HEK293 (cell line): ENCODE measurements at regions of chr3 and their contacts with region 1.

Region 1: GRCh38 chr3:148955544-148956346 is 35.6 kb upstream of the GYG1 start:
- H3K4me3 ChIP-seq: no peak overlapping the region
- H3K27ac ChIP-seq: no peak overlapping the region
- H3K4me1 ChIP-seq: no peaks in the 10 kb centered on the region
- CTCF ChIP-seq: 0 out of 2 replicates have a peak, but pooled peaks have one; percentile 29

Region 2: DNA sequence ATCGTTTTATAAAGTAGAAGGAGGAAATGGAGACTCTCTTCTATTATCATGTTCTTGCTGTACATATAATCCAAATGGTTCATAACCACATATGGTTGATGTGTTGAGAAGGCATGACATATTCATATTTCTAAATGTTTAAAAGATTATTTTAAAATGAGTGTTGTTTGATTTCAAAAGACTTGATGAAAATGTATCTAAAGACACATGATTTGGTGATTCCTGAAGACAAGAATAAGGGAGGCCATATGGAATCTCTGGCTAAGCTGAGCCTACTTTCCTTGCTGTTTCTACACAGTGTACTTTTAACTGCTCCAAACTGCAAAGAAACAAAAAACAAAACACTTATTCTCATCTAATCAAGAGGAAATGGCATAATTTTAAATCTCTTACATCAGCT is 12.6 kb after region 1 on chr3:
- CTCF ChIA-PET with region 1: interaction called, 11 read pairs
- POLR2A ChIA-PET with region 1: no interaction called
- H3K4me3 ChIP-seq: no peak overlapping the region
- H3K27ac ChIP-seq: no peak overlapping the region
- H3K4me1 ChIP-seq: no peaks in the 10 kb centered on the region
- CTCF ChIP-seq: no peak

Region 3: GRCh38 chr3:149101641-149102040 is 145.9 kb after region 1 on chr3:
- CTCF ChIA-PET with region 1: no interaction called
- POLR2A ChIA-PET with region 1: no interaction called
- H3K4me3 ChIP-seq: no peak overlapping the region
- H3K27ac ChIP-seq: no peak overlapping the region
- H3K4me1 ChIP-seq: no peaks in the 10 kb centered on the region
- CTCF ChIP-seq: no peak

Region 4: DNA sequence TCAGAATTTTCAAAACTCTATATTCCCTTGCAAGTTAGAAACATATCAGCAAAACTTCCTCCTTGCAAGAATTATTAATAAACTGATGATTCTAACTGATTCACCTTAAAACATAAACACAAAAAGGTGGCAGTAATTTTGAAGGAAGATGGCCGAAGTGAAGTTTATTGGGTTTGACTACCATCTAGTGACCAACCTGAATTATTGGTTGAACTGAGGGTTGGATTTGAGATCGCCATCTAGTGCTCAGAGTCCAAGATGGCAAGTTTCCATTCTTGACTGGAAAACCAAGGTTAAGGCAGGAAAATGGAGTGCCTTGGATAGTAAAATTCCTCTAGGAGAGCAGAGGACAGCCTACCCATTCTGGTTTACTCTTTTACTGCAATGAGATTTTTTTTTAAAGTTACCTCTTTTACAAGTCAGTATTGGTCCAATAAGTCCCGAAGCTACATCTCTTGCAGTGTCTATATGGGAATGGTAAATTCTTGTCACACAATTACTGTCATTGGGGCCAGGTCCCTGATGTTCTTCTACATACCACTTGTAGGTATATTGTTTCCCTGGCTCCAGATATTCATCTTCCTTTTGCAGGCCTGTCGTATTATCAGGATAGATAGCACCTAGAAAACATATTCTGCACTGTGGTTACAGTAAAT is 317.5 kb after region 1 on chr3:
- CTCF ChIA-PET with region 1: interaction called, 45 read pairs
- POLR2A ChIA-PET with region 1: no interaction called
- H3K4me3 ChIP-seq: no peak overlapping the region
- H3K27ac ChIP-seq: no peak overlapping the region
- H3K4me1 ChIP-seq: no peaks in the 10 kb centered on the region
- CTCF ChIP-seq: peak; percentile 86